Activated naive CD4-positive, alpha-beta T cell treated with anti-CD3 and anti-CD28 coated beads for 36 hours (primary cell): ENCODE measurements at regions of chr5 and their contacts with region 1.

Region 1: DNA sequence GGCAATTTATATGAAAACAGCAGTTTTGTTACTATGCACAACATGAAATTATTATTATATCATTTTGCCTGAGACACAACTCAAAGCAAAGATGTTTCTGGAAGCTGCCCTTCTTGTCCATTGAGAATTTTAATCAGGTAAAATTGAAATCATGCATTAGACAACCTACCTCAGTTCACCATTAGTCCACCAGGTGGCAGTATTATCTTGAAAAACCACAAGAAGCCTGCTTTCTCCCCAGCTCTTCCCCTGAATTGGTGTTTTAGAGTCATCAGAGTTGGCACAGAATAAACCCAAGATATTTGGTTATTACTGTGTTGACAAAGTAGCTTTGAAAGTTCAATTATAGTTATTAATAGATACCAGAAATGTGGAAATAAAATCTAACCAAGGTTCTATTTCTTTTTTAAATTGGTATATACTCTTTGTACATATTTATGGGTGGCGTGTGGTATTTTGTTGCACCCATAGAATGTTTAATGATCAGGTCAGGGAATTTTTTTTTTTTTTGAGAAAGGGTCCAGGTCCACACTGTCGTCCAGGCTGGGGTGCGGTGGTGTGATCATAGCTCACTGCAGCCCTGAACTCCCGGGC is 25.7 kb downstream of the UTP15 start:
- DNase-seq: peak; percentile 63
- H3K4me3 Mint-ChIP-seq: no peak overlapping the region
- H3K27ac Mint-ChIP-seq: no peak overlapping the region
- H3K4me1 Mint-ChIP-seq: no peaks in the 10 kb centered on the region
- H3K27me3 Mint-ChIP-seq: no peaks in the 10 kb centered on the region

Region 2: DNA sequence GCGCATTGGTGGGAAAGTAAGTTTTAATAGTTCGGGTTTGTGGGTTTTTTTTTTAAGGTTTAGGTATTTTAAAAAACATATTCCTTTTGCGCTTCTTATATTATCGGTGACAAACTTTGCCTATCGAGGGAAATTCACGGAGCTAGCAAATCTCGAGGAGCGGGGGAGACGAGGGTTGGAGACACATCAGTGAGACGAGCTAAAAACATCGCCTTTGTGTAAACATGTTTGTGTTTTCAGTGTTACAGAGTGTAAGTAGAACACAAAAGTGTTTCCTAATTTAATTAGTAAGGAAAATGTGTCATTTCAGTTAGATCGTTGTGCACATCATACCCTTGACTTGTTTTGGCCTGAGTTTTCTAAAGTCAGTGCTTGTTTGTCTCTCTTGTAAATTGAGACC is 92.0 kb before region 1 on chr5:
- CTCF ChIA-PET with region 1: no interaction called
- intact Hi-C with region 1: no loop called
- DNase-seq: no peak
- H3K4me3 Mint-ChIP-seq: peak overlapping the region; percentile 97
- H3K27ac Mint-ChIP-seq: peak overlapping the region; percentile 96
- H3K4me1 Mint-ChIP-seq: peaks cover 46% of the 10 kb centered on the region
- H3K27me3 Mint-ChIP-seq: peaks cover 1% of the 10 kb centered on the region

Region 3: DNA sequence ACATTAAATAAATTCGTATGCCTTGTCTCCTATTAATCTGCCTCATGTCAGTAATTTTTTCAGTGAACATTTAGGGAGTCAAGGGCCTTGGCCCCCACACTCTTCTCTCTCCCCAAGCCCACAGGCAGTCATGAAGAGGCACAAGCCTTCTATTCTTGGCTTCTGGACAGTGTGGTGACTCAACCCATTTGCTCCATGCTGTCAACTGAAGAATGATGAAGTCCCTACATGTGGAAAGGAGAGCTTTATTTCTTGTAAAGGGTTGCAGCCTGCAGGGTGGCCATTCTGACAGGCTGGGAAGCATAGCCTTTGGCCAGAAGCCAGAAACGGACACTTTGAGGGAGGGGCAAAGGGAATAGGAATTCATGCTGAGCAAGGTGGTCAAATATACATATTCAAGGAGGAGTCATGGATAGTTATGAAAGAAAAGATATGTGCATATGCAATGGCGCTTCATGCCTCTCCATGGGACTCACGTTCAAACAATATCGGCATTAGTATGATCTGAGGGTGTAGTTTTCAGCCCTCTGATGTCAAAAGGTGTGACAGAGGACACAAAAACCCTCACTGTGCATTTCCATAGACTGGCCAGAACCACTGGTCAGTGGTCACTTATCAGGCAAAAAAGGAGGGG is 57.1 kb before region 1 on chr5:
- CTCF ChIA-PET with region 1: interaction called, 10 read pairs
- intact Hi-C with region 1: no loop called
- DNase-seq: no peak
- H3K4me3 Mint-ChIP-seq: no peak overlapping the region
- H3K27ac Mint-ChIP-seq: no peak overlapping the region
- H3K4me1 Mint-ChIP-seq: no peaks in the 10 kb centered on the region
- H3K27me3 Mint-ChIP-seq: peaks cover 17% of the 10 kb centered on the region

Region 4: DNA sequence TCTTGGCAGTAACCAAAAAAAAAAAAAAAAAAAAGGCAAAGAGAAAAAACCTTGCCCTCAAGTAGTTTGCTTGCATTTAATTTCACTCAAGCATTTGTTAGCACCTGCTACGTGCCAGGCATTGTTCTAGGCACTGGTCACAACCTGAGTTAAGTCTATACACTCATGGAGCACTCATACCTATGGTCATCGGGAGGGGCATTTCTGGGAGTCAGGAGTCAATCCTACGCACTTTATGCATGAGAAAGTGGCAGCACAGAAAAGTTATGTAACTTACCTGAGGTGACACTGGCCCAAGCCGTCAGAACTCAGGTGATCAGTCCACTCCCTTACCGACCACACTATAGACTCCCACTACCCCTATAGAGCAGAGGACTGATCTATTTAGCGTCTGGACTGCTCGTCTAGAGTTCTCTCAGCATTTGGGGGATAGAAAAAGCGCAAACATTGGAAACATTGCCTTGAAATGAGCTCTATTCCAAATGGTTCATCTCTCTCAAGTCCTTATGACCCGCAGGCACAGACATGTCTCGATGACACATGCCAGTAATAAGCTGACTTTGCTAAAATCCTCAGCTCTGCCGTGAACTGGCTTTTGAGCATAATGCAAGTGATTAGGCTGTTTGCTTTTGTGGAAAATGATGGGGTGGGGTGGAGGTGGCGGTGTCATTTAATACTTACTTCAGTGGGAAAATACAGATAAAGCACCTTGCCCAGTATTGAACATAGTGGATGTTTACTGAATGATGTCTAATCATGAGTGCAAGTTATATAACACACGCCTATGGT is 195.0 kb after region 1 on chr5:
- CTCF ChIA-PET with region 1: interaction called, 155 read pairs
- intact Hi-C with region 1: no loop called
- DNase-seq: no peak
- H3K4me3 Mint-ChIP-seq: no peak overlapping the region
- H3K27ac Mint-ChIP-seq: no peak overlapping the region
- H3K4me1 Mint-ChIP-seq: no peaks in the 10 kb centered on the region
- H3K27me3 Mint-ChIP-seq: peaks cover 16% of the 10 kb centered on the region

Region 5: GRCh38 chr5:73902327-73903051 is 311.3 kb after region 1 on chr5:
- CTCF ChIA-PET with region 1: interaction called, 3 read pairs
- intact Hi-C with region 1: loop called (anchors 2 kb)
- DNase-seq: peak; percentile 9
- H3K4me3 Mint-ChIP-seq: no peak overlapping the region
- H3K27ac Mint-ChIP-seq: no peak overlapping the region
- H3K4me1 Mint-ChIP-seq: peaks cover 3% of the 10 kb centered on the region
- H3K27me3 Mint-ChIP-seq: peaks cover 23% of the 10 kb centered on the region